CD8-positive, alpha-beta T cell (primary cell): ENCODE measurements at regions of chr11 and their contacts with region 1.

Region 1: GRCh38 chr11:134261626-134262488 is 8.5 kb downstream of the ACAD8 start:
- DNase-seq: peak in 5 of 9 experiments; percentile 34 to 60 (median 38)
- ATAC-seq: peak; percentile 56
- H3K4me3 ChIP-seq: no peak overlapping the region
- H3K4me3 Mint-ChIP-seq: no peak overlapping the region
- H3K27ac ChIP-seq: no peak overlapping the region
- H3K27ac Mint-ChIP-seq: no peak overlapping the region
- H3K4me1 ChIP-seq: no peaks in the 10 kb centered on the region
- H3K4me1 Mint-ChIP-seq: peaks cover 2% of the 10 kb centered on the region
- H3K27me3 ChIP-seq: no peaks in the 10 kb centered on the region
- H3K27me3 Mint-ChIP-seq: no peaks in the 10 kb centered on the region
- CTCF ChIP-seq: peak; percentile 39

Region 2: GRCh38 chr11:133762538-133762937 is 499.3 kb before region 1 on chr11:
- CTCF ChIA-PET with region 1: no interaction called
- POLR2A ChIA-PET with region 1: no interaction called
- intact Hi-C with region 1: no loop called
- DNase-seq: no peak
- ATAC-seq: no peak
- H3K4me3 ChIP-seq: no peak overlapping the region
- H3K4me3 Mint-ChIP-seq: no peak overlapping the region
- H3K27ac ChIP-seq: no peak overlapping the region
- H3K27ac Mint-ChIP-seq: no peak overlapping the region
- H3K4me1 ChIP-seq: no peaks in the 10 kb centered on the region
- H3K4me1 Mint-ChIP-seq: no peaks in the 10 kb centered on the region
- H3K27me3 ChIP-seq: no peaks in the 10 kb centered on the region
- H3K27me3 Mint-ChIP-seq: peaks cover 4% of the 10 kb centered on the region
- CTCF ChIP-seq: no peak

Region 3: GRCh38 chr11:134275534-134276395 is 13.9 kb after region 1 on chr11 and contains the start of gene GLB1L3:
- CTCF ChIA-PET with region 1: interaction called, 37 read pairs
- POLR2A ChIA-PET with region 1: interaction called, 7 read pairs
- intact Hi-C with region 1: no loop called
- DNase-seq: peak; percentile 54 to 88 (median 78)
- ATAC-seq: peak; percentile 92
- H3K4me3 ChIP-seq: peak within 1 kb of the TSS; percentile 64 to 65
- H3K4me3 Mint-ChIP-seq: peak within 1 kb of the TSS; percentile 90
- H3K27ac ChIP-seq: peak within 1 kb of the TSS; percentile 32 to 63
- H3K27ac Mint-ChIP-seq: peak within 1 kb of the TSS; percentile 81
- H3K4me1 ChIP-seq: peaks cover 27% of the 10 kb centered on the region
- H3K4me1 Mint-ChIP-seq: peaks cover 46% of the 10 kb centered on the region
- H3K27me3 ChIP-seq: peaks cover 0 to 3% of the 10 kb centered on the region in 2 experiments
- H3K27me3 Mint-ChIP-seq: peaks cover 8% of the 10 kb centered on the region
- CTCF ChIP-seq: peak; percentile 65
- total RNA-seq, gene GLB1L3: 0.58 to 0.87 TPM

Region 4: GRCh38 chr11:134449713-134450112 is 187.9 kb after region 1 on chr11:
- CTCF ChIA-PET with region 1: no interaction called
- POLR2A ChIA-PET with region 1: no interaction called
- intact Hi-C with region 1: loop called in 1 of 2 experiments (anchors 2 kb)
- DNase-seq: peak in 2 of 9 experiments; percentile 25 to 41
- ATAC-seq: no peak
- H3K4me3 ChIP-seq: no peak overlapping the region
- H3K4me3 Mint-ChIP-seq: no peak overlapping the region
- H3K27ac ChIP-seq: no peak overlapping the region
- H3K27ac Mint-ChIP-seq: no peak overlapping the region
- H3K4me1 ChIP-seq: no peaks in the 10 kb centered on the region
- H3K4me1 Mint-ChIP-seq: no peaks in the 10 kb centered on the region
- H3K27me3 ChIP-seq: no peaks in the 10 kb centered on the region
- H3K27me3 Mint-ChIP-seq: peaks cover 7% of the 10 kb centered on the region
- CTCF ChIP-seq: no peak

Region 5: GRCh38 chr11:134742224-134742612 is 480.4 kb after region 1 on chr11:
- CTCF ChIA-PET with region 1: no interaction called
- POLR2A ChIA-PET with region 1: no interaction called
- intact Hi-C with region 1: no loop called
- DNase-seq: peak in 4 of 9 experiments; percentile 31 to 66 (median 40)
- ATAC-seq: peak; percentile 81
- H3K4me3 ChIP-seq: no peak overlapping the region
- H3K4me3 Mint-ChIP-seq: no peak overlapping the region
- H3K27ac ChIP-seq: no peak overlapping the region
- H3K27ac Mint-ChIP-seq: no peak overlapping the region
- H3K4me1 ChIP-seq: no peaks in the 10 kb centered on the region
- H3K4me1 Mint-ChIP-seq: peaks cover 13% of the 10 kb centered on the region
- H3K27me3 ChIP-seq: peaks cover 0 to 7% of the 10 kb centered on the region in 2 experiments
- H3K27me3 Mint-ChIP-seq: peaks cover 5% of the 10 kb centered on the region
- CTCF ChIP-seq: no peak

Region 6: GRCh38 chr11:135062994-135063393 is 801.1 kb after region 1 on chr11:
- CTCF ChIA-PET with region 1: no interaction called
- POLR2A ChIA-PET with region 1: no interaction called
- intact Hi-C with region 1: no loop called
- DNase-seq: no peak
- ATAC-seq: no peak
- H3K4me3 ChIP-seq: no peak overlapping the region
- H3K4me3 Mint-ChIP-seq: no peak overlapping the region
- H3K27ac ChIP-seq: no peak overlapping the region
- H3K27ac Mint-ChIP-seq: no peak overlapping the region
- H3K4me1 ChIP-seq: no peaks in the 10 kb centered on the region
- H3K4me1 Mint-ChIP-seq: no peaks in the 10 kb centered on the region
- H3K27me3 ChIP-seq: peaks cover 0 to 2% of the 10 kb centered on the region in 2 experiments
- H3K27me3 Mint-ChIP-seq: peaks cover 14% of the 10 kb centered on the region
- CTCF ChIP-seq: no peak